ENCODE measurements at regions of chr19 and their contacts with region 1.

Region 1: GRCh38 chr19:51514866-51515481 is 13.4 kb upstream of the SIGLEC12 start:
- DNase-seq: no peak
- H3K4me3 Mint-ChIP-seq: no peak overlapping the region
- H3K27ac Mint-ChIP-seq: no peak overlapping the region
- H3K4me1 Mint-ChIP-seq: peaks cover 7% of the 10 kb centered on the region
- H3K27me3 Mint-ChIP-seq: peaks cover 29% of the 10 kb centered on the region

Region 2: GRCh38 chr19:51473009-51473707 is 41.8 kb before region 1 on chr19:
- CTCF ChIA-PET with region 1: interaction called, 49 read pairs
- POLR2A ChIA-PET with region 1: no interaction called
- DNase-seq: peak; percentile 82
- H3K4me3 Mint-ChIP-seq: no peak overlapping the region
- H3K27ac Mint-ChIP-seq: no peak overlapping the region
- H3K4me1 Mint-ChIP-seq: peaks cover 13% of the 10 kb centered on the region
- H3K27me3 Mint-ChIP-seq: peaks cover 8% of the 10 kb centered on the region

Region 3: DNA sequence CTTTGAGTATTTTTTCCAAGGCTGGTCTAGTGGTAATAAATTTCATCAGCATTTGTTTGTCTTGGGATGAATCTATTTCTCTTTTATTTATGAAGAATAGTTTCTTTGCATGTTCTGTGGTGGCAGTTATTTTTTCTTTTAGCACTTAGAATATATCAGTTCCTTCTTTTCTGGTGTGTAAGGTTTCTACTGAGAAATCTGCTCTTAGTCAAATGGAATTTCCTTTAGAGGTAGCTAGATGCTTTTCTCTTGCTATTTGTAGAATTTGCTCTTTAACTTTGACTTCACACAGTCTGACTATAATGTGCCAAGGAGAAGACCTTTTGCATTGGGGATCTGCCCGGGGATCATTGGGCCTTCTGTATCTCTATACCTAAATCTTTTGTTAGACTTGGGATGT is 20.6 kb after region 1 on chr19:
- CTCF ChIA-PET with region 1: no interaction called
- POLR2A ChIA-PET with region 1: no interaction called
- DNase-seq: no peak
- H3K4me3 Mint-ChIP-seq: no peak overlapping the region
- H3K27ac Mint-ChIP-seq: no peak overlapping the region
- H3K4me1 Mint-ChIP-seq: peaks cover 8% of the 10 kb centered on the region
- H3K27me3 Mint-ChIP-seq: peaks cover 62% of the 10 kb centered on the region